Breast epithelium (tissue), 4 donors: ENCODE measurements at regions of chr2 and their contacts with region 1.

Region 1: DNA sequence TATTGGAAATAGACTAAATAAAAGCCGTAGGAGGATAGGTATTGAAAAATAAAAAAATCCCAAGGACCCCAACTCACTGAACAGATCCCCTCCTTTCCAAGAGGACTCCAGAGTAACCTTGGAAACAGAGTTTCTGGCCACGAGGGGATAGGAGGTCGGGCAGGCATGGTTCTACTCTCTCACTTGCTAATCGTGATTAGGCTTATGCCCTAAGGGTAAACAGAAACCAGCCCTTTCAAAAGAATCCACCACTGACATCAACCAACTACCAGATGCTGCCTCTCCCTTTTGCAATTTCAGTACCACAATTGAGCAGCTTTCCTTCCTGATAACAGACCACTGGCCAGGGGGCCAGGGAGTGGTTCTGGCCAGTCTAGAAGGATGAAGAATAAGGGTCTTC is 477.8 kb downstream of the EIPR1 start:
- DNase-seq: no peak
- H3K4me3 ChIP-seq: no peak overlapping the region
- H3K27ac ChIP-seq: no peak overlapping the region
- H3K4me1 ChIP-seq: no peaks in the 10 kb centered on the region
- H3K27me3 ChIP-seq: no peaks in the 10 kb centered on the region
- CTCF ChIP-seq: no peak
- POLR2A ChIP-seq: no peak

Region 2: GRCh38 chr2:2448179-2448578 is 451.6 kb before region 1 on chr2:
- intact Hi-C with region 1: loop called (anchors 5 kb)
- DNase-seq: no peak
- H3K4me3 ChIP-seq: no peak overlapping the region
- H3K27ac ChIP-seq: no peak overlapping the region
- H3K4me1 ChIP-seq: no peaks in the 10 kb centered on the region
- H3K27me3 ChIP-seq: no peaks in the 10 kb centered on the region
- CTCF ChIP-seq: no peak
- POLR2A ChIP-seq: no peak

Region 3: GRCh38 chr2:2919026-2919969 is 19.5 kb after region 1 on chr2:
- intact Hi-C with region 1: no loop called
- DNase-seq: no peak
- H3K4me3 ChIP-seq: no peak overlapping the region
- H3K27ac ChIP-seq: no peak overlapping the region
- H3K4me1 ChIP-seq: no peaks in the 10 kb centered on the region
- H3K27me3 ChIP-seq: no peaks in the 10 kb centered on the region
- CTCF ChIP-seq: no peak
- POLR2A ChIP-seq: no peak